ENCODE measurements at regions of chr1 and their contacts with region 1.

Region 1: GRCh38 chr1:172180501-172181285 is 239.8 kb upstream of the C1orf105 start:
- DNase-seq: peak; percentile 46 to 58 (median 55)
- H3K4me3 ChIP-seq: peak overlapping the region; percentile 23 to 36
- H3K4me3 Mint-ChIP-seq: peak overlapping the region; percentile 75 to 92 (median 86)
- H3K27ac ChIP-seq: peak overlapping the region; percentile 75
- H3K27ac Mint-ChIP-seq: peak overlapping the region; percentile 94 to 99 (median 97)
- H3K4me1 ChIP-seq: peaks cover 44% of the 10 kb centered on the region
- H3K4me1 Mint-ChIP-seq: peaks cover 25 to 61% (median 48%) of the 10 kb centered on the region in 4 donors
- H3K27me3 ChIP-seq: no peaks in the 10 kb centered on the region
- H3K27me3 Mint-ChIP-seq: no peaks in the 10 kb centered on the region

Region 2: GRCh38 chr1:170531758-170532657 is 1648.7 kb before region 1 on chr1 and contains the start of gene GORAB:
- CTCF ChIA-PET with region 1: no interaction called
- POLR2A ChIA-PET with region 1: no interaction called
- intact Hi-C with region 1: loop called (anchors 10 kb)
- DNase-seq: peak; percentile 84 to 93 (median 90)
- H3K4me3 ChIP-seq: peak within 1 kb of the TSS; percentile 87 to 90
- H3K4me3 Mint-ChIP-seq: no peak within 1 kb of the TSS
- H3K27ac ChIP-seq: peak within 1 kb of the TSS; percentile 92
- H3K27ac Mint-ChIP-seq: peak within 1 kb of the TSS in 3 of 7 donors; percentile 44 to 75 (median 51)
- H3K4me1 ChIP-seq: peaks cover 27% of the 10 kb centered on the region
- H3K4me1 Mint-ChIP-seq: peaks cover 11 to 22% (median 12%) of the 10 kb centered on the region in 4 donors
- H3K27me3 ChIP-seq: no peaks in the 10 kb centered on the region
- H3K27me3 Mint-ChIP-seq: no peaks in the 10 kb centered on the region
- total RNA-seq, gene GORAB: 17.0 to 24.1 TPM

Region 3: GRCh38 chr1:171654942-171655745 is 525.5 kb before region 1 on chr1:
- CTCF ChIA-PET with region 1: no interaction called
- POLR2A ChIA-PET with region 1: no interaction called
- intact Hi-C with region 1: no loop called
- DNase-seq: peak; percentile 38 to 62 (median 52)
- H3K4me3 ChIP-seq: no peak overlapping the region
- H3K4me3 Mint-ChIP-seq: peak overlapping the region; percentile 31 to 74 (median 61)
- H3K27ac ChIP-seq: no peak overlapping the region
- H3K27ac Mint-ChIP-seq: no peak overlapping the region
- H3K4me1 ChIP-seq: peaks cover 12% of the 10 kb centered on the region
- H3K4me1 Mint-ChIP-seq: peaks cover 9 to 13% (median 10%) of the 10 kb centered on the region in 4 donors
- H3K27me3 ChIP-seq: no peaks in the 10 kb centered on the region
- H3K27me3 Mint-ChIP-seq: peaks cover 5 to 11% of the 10 kb centered on the region in 2 donors

Region 4: DNA sequence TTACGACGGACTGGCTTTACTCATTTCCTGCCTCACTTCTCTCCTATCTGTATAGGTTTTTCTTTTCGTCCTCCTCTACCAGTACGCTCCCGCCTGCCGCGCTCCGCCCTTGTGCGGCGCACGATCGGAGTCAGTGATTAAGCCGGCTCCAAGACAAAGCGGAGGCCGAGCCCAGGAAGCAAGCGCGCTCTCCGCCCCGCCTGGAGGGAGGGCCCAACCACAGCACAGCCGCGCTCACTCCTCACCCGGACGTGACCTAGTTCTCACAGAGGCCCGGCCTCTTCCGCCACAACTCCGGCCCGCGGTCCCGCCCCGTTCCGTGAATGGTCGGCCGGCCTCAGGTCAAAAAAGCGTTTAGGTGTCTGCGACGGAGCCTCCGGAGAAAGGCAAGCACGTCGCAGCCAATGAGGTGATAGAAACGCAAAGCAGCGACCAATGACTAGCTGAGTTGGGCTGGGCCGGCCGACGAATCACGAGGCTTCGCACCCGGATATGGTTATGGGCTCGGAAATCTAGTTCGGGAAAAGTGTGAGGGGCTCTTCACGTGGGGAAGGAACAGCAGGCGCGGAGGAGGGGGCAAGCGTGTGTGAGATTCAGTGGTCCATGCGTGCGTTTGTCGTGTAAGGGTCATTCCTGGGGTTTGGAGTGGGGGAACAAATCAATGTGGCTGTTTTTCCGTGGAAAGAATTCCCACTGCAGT is 399.4 kb before region 1 on chr1 and contains the start of gene METTL13:
- CTCF ChIA-PET with region 1: no interaction called
- POLR2A ChIA-PET with region 1: no interaction called
- intact Hi-C with region 1: loop called (anchors 1 kb)
- DNase-seq: peak; percentile 98 to 100 (median 99)
- H3K4me3 ChIP-seq: peak within 1 kb of the TSS; percentile 92 to 99
- H3K4me3 Mint-ChIP-seq: peak within 1 kb of the TSS; percentile 94 to 100 (median 96)
- H3K27ac ChIP-seq: peak within 1 kb of the TSS; percentile 71
- H3K27ac Mint-ChIP-seq: peak within 1 kb of the TSS; percentile 86 to 99 (median 98)
- H3K4me1 ChIP-seq: peaks cover 53% of the 10 kb centered on the region
- H3K4me1 Mint-ChIP-seq: peaks cover 37 to 67% (median 48%) of the 10 kb centered on the region in 4 donors
- H3K27me3 ChIP-seq: no peaks in the 10 kb centered on the region
- H3K27me3 Mint-ChIP-seq: no peaks in the 10 kb centered on the region
- total RNA-seq, gene METTL13: 33.3 to 36.7 TPM

Region 5: GRCh38 chr1:172154551-172154950 is 26.1 kb before region 1 on chr1:
- CTCF ChIA-PET with region 1: no interaction called
- POLR2A ChIA-PET with region 1: interaction called, 4 read pairs
- intact Hi-C with region 1: loop called (anchors 2 kb)
- DNase-seq: peak in 3 of 5 donors; percentile 2 to 21 (median 10)
- H3K4me3 ChIP-seq: no peak overlapping the region
- H3K4me3 Mint-ChIP-seq: peak overlapping the region in 6 of 8 donors; percentile 0 to 23 (median 5)
- H3K27ac ChIP-seq: no peak overlapping the region
- H3K27ac Mint-ChIP-seq: peak overlapping the region in 6 of 7 donors; percentile 2 to 91 (median 24)
- H3K4me1 ChIP-seq: peaks cover 11% of the 10 kb centered on the region
- H3K4me1 Mint-ChIP-seq: peaks cover 4 to 7% (median 7%) of the 10 kb centered on the region in 4 donors
- H3K27me3 ChIP-seq: no peaks in the 10 kb centered on the region
- H3K27me3 Mint-ChIP-seq: no peaks in the 10 kb centered on the region

Region 6: DNA sequence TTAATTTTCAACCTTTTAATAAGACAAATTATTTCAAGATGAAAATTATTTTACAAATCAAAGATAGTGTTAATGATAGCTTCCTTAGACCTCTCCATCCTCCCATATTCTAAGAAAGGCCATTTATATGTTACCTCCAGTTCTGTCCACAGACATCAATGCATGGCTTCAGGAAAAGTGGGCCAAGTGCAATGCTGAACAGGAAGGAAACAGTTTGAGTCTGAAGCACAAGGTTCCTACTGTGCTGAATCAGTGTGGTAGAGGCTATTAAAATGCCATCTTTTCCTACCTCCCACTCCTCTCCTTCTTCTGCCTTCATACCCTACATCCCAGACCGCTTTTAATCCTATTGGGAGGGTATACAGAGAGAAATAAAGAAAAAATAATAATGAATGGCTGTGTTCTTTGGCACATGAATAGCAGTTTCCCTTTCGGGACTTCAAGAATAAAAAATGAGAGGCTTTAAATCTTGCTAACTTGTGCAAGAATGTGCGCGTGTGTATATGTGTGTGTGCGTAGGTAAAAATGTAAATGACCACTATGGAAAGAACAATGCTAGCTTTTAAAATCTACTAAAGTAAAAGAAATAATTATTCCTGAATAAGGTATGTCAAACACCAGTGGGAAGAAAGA is 177.2 kb after region 1 on chr1:
- CTCF ChIA-PET with region 1: no interaction called
- POLR2A ChIA-PET with region 1: interaction called, 26 read pairs
- intact Hi-C with region 1: loop called (anchors 1 kb)
- DNase-seq: no peak
- H3K4me3 ChIP-seq: no peak overlapping the region
- H3K4me3 Mint-ChIP-seq: peak overlapping the region; percentile 62 to 84 (median 74)
- H3K27ac ChIP-seq: peak overlapping the region; percentile 56
- H3K27ac Mint-ChIP-seq: peak overlapping the region in 6 of 7 donors; percentile 73 to 95 (median 90)
- H3K4me1 ChIP-seq: peaks cover 66% of the 10 kb centered on the region
- H3K4me1 Mint-ChIP-seq: peaks cover 22 to 58% (median 46%) of the 10 kb centered on the region in 4 donors
- H3K27me3 ChIP-seq: no peaks in the 10 kb centered on the region
- H3K27me3 Mint-ChIP-seq: no peaks in the 10 kb centered on the region

Region 7: DNA sequence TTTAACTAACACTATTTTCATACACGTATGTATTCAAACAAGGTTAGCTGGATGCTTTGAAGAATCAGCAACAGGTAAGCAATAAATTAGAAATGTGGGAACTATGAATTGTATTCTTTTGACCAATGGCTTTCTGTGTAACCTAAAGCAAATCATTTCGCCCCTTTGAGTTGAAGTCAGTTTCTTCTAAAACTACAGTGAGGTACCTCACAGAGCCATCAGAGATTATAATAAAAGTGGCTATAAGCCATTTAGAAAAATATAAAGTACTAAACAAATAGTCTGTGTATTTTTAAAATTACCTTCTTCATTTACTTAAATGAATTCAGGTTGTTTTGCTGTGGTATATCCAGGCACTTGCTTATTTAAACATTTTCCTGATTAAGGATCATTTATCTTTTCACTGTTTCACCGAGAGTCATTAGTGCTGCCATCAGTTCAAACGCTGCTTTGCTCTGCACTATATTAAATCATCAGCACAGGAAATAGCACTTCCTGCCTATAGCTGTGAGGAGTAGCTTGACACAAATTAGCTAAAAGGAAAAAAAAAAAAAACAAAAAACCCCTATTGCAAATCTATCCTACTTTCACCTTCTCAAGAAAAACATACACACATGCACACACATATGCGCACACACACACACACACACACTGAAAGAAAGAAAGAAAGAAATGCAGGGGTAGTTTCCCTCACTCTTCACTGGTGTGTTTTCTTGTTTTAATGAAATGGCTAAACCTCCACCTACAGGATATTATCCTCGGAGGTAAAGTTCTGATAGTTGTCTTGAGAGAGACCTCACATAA is 199.9 kb after region 1 on chr1:
- CTCF ChIA-PET with region 1: interaction called, 3 read pairs
- POLR2A ChIA-PET with region 1: interaction called, 3 read pairs
- intact Hi-C with region 1: loop called (anchors 5 kb)
- DNase-seq: peak; percentile 53 to 80 (median 72)
- H3K4me3 ChIP-seq: peak overlapping the region in 1 of 2 donors; percentile 22
- H3K4me3 Mint-ChIP-seq: peak overlapping the region; percentile 65 to 91 (median 77)
- H3K27ac ChIP-seq: peak overlapping the region; percentile 54
- H3K27ac Mint-ChIP-seq: peak overlapping the region; percentile 80 to 97 (median 91)
- H3K4me1 ChIP-seq: peaks cover 31% of the 10 kb centered on the region
- H3K4me1 Mint-ChIP-seq: peaks cover 17 to 39% (median 29%) of the 10 kb centered on the region in 4 donors
- H3K27me3 ChIP-seq: no peaks in the 10 kb centered on the region
- H3K27me3 Mint-ChIP-seq: no peaks in the 10 kb centered on the region

Region 8: DNA sequence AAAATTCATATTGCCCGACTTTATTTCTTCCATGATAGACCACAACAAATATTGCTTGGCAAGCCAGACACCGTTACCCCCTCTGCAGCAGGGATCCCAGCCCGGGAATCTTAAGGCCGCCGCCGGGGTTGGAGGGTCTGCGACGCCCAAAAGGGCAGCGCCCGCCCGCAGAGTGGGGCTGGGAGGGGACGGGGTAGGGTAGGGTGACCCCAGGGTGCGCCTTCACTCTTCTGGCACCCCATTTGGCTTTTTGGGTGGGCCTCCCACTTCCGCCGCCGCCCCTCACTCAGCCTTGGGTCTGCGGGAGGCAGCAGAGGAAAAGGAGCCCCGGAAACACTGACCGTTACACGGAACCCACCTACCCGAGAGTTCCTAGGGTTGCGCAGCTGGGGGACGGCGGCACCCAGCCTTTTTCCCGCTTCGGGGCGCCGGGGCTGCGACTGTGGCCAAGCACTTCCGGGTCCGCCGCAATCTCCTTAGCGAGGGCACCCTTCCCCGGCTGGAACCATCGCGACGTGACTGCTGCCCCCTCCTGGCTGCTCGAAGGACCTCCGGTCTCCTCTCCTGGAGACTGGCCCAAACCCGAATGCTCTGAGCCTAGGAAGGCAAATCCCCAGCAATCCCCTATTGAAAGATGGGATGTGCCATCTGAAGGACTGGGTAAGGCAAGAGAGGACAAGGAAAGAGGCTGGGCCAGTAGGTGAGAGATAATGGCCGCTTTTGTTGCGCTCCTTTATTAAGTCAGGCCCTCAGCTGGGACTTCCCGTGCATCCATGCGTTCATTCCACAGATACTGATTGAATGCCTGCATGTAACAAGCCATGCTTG is 263.1 kb after region 1 on chr1 and contains the start of gene PIGC:
- CTCF ChIA-PET with region 1: no interaction called
- POLR2A ChIA-PET with region 1: no interaction called
- intact Hi-C with region 1: loop called (anchors 5 kb)
- DNase-seq: peak; percentile 86 to 89 (median 87)
- H3K4me3 ChIP-seq: peak within 1 kb of the TSS; percentile 44 to 83
- H3K4me3 Mint-ChIP-seq: peak within 1 kb of the TSS; percentile 92 to 98 (median 96)
- H3K27ac ChIP-seq: peak within 1 kb of the TSS; percentile 67
- H3K27ac Mint-ChIP-seq: peak within 1 kb of the TSS; percentile 89 to 97 (median 95)
- H3K4me1 ChIP-seq: peaks cover 36% of the 10 kb centered on the region
- H3K4me1 Mint-ChIP-seq: peaks cover 32 to 49% (median 41%) of the 10 kb centered on the region in 4 donors
- H3K27me3 ChIP-seq: no peaks in the 10 kb centered on the region
- H3K27me3 Mint-ChIP-seq: no peaks in the 10 kb centered on the region
- total RNA-seq, gene PIGC: 48.9 to 49.2 TPM